Breast epithelium (tissue), 4 donors: ENCODE measurements at regions of chr11 and their contacts with region 1.

Region 1: GRCh38 chr11:118689851-118690552 is 10.6 kb upstream of the TREH start:
- DNase-seq: peak; percentile 95
- H3K4me3 ChIP-seq: peak overlapping the region; percentile 30 to 62 (median 36)
- H3K27ac ChIP-seq: peak overlapping the region; percentile 89 to 92
- H3K4me1 ChIP-seq: peaks cover 0 to 8% of the 10 kb centered on the region in 2 donors
- H3K27me3 ChIP-seq: no peaks in the 10 kb centered on the region
- CTCF ChIP-seq: peak; percentile 24 to 94 (median 92)
- POLR2A ChIP-seq: no peak

Region 2: GRCh38 chr11:117663821-117664220 is 1026.2 kb before region 1 on chr11:
- intact Hi-C with region 1: loop called (anchors 5 kb)
- DNase-seq: no peak
- H3K4me3 ChIP-seq: no peak overlapping the region
- H3K27ac ChIP-seq: no peak overlapping the region
- H3K4me1 ChIP-seq: no peaks in the 10 kb centered on the region
- H3K27me3 ChIP-seq: no peaks in the 10 kb centered on the region
- CTCF ChIP-seq: no peak
- POLR2A ChIP-seq: no peak

Region 3: DNA sequence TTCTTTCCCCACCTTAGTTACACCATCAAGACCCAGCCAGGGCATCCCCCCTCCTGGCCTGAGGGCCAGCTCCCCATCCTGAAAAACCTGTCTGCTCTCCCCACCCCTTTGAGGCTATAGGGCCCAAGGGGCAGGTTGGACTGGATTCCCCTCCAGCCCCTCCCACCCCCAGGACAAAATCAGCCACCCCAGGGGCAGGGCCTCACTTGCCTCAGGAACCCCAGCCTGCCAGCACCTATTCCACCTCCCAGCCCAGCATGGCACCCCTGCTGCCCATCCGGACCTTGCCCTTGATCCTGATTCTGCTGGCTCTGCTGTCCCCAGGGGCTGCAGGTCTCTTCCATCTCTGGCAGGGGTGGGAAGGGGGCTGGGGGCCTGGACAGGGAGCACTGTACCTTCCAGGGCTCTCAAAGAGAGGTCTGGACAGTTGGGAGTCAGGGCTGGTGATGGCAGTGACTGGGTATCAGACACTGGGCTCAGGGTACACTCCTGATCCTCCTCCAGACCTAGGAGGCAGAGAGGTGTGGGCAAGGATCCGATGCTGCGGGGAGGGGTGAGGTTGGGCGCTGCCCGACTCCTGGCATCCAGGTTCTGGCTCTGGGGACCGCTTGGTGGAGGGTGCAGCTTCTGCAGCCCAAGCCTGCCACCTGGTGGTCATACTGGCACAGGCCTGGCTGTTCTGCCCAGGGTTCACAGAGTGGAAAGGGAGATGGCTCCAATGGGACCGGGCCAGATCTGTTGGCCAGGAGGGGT is 266.3 kb after region 1 on chr11 and contains the start of gene UPK2:
- intact Hi-C with region 1: loop called (anchors 10 kb)
- DNase-seq: peak; percentile 82 to 90
- H3K4me3 ChIP-seq: no peak within 1 kb of the TSS
- H3K27ac ChIP-seq: no peak within 1 kb of the TSS
- H3K4me1 ChIP-seq: no peaks in the 10 kb centered on the region
- H3K27me3 ChIP-seq: peaks cover 0 to 1% of the 10 kb centered on the region in 2 donors
- CTCF ChIP-seq: peak; percentile 94 to 98 (median 97)
- POLR2A ChIP-seq: no peak
- total RNA-seq, gene UPK2: not detected